T-cell (primary cell): ENCODE measurements at regions of chr16 and their contacts with region 1.

Region 1: DNA sequence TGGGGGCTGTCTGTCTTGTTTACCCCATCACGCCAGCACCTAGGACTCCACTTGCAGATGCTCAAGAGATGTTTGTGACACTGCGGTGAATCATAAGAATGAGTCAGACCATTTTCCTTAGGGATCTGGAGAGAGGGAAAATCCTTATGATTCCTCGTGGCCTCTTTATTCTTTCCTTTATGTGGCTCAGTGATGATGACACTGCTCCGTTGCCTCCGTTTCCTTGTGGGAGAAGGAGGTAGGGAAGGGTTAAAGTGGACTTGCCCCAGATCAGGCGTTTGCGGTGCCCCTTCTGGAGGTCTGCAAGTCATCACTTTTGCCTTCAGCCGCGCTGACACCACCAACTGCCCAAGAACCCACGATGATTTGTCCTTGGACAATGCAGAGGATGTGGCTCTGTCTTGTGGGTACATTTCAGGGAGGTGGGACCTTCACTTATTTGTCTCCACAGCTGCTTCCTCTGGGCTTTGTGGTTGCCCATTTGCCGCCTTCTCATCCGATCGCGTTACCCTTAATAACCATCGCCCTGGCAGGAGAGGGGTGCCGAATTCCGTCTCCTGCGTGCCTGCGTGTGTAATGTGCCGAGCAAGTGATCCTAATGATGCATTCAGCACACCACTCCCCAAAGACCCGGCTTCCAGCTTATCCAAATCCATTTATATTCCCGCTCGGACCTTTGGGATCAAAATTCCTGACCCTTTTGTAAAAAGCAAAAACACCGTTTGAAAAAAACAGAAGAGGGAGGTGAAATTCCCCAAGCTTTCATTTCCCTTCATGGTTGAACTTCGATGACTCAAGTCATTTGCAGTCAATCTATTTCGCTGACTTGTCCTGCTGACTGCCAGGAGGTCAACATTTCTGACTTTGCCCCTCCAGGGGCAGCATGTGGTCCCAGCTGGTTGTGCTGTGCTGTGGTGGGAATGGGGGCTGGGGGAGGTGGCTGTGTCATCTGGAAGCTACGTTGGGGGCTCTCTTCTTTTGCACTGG is 87.2 kb upstream of the IRX3 start:
- DNase-seq: no peak
- ATAC-seq: no peak
- H3K4me3 ChIP-seq: no peak overlapping the region
- H3K4me3 Mint-ChIP-seq: no peak overlapping the region
- H3K27ac ChIP-seq: no peak overlapping the region
- H3K27ac Mint-ChIP-seq: no peak overlapping the region
- H3K4me1 ChIP-seq: no peaks in the 10 kb centered on the region
- H3K4me1 Mint-ChIP-seq: peaks cover 0 to 7% (median 1%) of the 10 kb centered on the region in 3 donors
- H3K27me3 ChIP-seq: peaks cover 3 to 52% of the 10 kb centered on the region in 2 experiments
- H3K27me3 Mint-ChIP-seq: peaks cover 52 to 55% of the 10 kb centered on the region in 2 donors

Region 2: GRCh38 chr16:54389836-54390494 is 16.1 kb after region 1 on chr16:
- CTCF ChIA-PET with region 1: no interaction called
- POLR2A ChIA-PET with region 1: interaction called in 1 of 2 experiments, 11 read pairs
- DNase-seq: no peak
- ATAC-seq: no peak
- H3K4me3 ChIP-seq: no peak overlapping the region
- H3K4me3 Mint-ChIP-seq: no peak overlapping the region
- H3K27ac ChIP-seq: no peak overlapping the region
- H3K27ac Mint-ChIP-seq: no peak overlapping the region
- H3K4me1 ChIP-seq: no peaks in the 10 kb centered on the region
- H3K4me1 Mint-ChIP-seq: no peaks in the 10 kb centered on the region
- H3K27me3 ChIP-seq: peaks cover 0 to 2% of the 10 kb centered on the region in 2 experiments
- H3K27me3 Mint-ChIP-seq: peaks cover 5 to 8% of the 10 kb centered on the region in 2 donors

Region 3: DNA sequence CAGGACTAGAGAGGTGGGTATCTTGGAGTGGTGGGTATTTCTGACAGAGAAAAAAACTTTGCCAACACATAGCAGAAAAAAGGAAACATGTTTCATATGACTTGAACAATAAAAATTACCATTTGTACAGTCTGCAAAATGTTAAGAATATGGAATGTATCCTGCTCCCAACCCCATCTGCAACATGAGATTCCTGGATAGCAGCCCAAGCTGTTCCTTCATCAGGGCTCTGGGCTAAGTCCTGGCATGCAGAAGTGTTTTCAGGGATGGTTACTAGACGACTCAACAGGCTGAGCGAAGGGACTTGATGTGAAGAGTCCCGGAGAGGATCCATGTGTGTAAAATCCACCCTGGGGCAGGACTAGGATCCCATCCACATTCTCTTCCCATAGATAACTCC is 33.8 kb after region 1 on chr16:
- CTCF ChIA-PET with region 1: no interaction called
- POLR2A ChIA-PET with region 1: no interaction called
- DNase-seq: no peak
- ATAC-seq: no peak
- H3K4me3 ChIP-seq: no peak overlapping the region
- H3K4me3 Mint-ChIP-seq: no peak overlapping the region
- H3K27ac ChIP-seq: no peak overlapping the region
- H3K27ac Mint-ChIP-seq: no peak overlapping the region
- H3K4me1 ChIP-seq: no peaks in the 10 kb centered on the region
- H3K4me1 Mint-ChIP-seq: peaks cover 0 to 3% (median 0%) of the 10 kb centered on the region in 3 donors
- H3K27me3 ChIP-seq: peaks cover 0 to 23% of the 10 kb centered on the region in 2 experiments
- H3K27me3 Mint-ChIP-seq: peaks cover 4 to 10% of the 10 kb centered on the region in 2 donors